ENCODE measurements at regions of chr11 and their contacts with region 1.

Region 1: DNA sequence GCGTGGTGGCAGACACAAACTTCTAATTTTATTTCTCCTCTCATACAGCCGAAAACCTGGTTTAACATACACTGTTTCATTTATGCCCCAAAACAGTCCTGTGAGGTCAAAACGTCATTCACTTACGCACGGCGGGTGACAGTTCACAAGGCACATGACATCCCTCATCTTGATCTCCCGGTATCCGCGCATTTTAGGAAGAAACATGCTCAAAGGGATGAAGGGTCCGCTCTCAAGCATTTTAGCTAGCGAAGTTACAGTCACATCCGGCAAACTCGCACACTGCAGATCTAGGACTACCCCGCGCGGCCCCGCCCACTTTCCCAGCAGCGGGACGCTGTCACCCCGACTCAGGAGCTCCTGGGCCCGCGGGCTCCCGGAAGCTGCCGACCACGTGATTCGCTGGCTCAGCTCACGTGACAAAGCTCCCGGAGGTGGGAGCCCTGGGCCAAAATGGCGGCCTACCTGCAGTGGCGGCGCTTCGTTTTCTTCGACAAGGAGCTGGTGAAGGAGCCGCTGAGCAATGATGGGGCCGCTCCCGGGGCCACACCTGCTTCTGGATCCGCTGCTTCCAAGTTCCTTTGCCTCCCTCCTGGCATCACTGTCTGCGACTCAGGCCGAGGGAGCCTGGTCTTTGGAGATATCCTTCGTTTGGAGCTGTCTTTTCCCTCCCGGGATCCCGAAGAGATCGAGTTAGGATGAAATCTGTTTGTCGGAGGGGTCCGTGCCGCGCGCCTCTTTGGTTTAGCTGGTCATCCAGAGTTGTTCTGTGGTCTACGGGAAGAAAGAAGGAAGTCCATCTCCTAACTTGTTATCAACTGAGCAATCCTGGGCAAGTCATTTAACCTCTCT is at the start of gene VPS11:
- DNase-seq: peak; percentile 89 to 100 (median 98)
- ATAC-seq: peak; percentile 92 to 99 (median 98)
- H3K4me3 ChIP-seq: peak within 1 kb of the TSS; percentile 61 to 94
- H3K4me3 Mint-ChIP-seq: peak within 1 kb of the TSS; percentile 94 to 97 (median 96)
- H3K27ac ChIP-seq: peak within 1 kb of the TSS; percentile 94
- H3K27ac Mint-ChIP-seq: peak within 1 kb of the TSS; percentile 96 to 99
- H3K4me1 ChIP-seq: peaks cover 16 to 33% of the 10 kb centered on the region in 2 experiments
- H3K4me1 Mint-ChIP-seq: peaks cover 44 to 55% (median 48%) of the 10 kb centered on the region in 3 donors
- H3K27me3 ChIP-seq: no peaks in the 10 kb centered on the region
- H3K27me3 Mint-ChIP-seq: no peaks in the 10 kb centered on the region
- total RNA-seq, gene VPS11: 59.5 to 69.8 (median 62.6) TPM

Region 2: DNA sequence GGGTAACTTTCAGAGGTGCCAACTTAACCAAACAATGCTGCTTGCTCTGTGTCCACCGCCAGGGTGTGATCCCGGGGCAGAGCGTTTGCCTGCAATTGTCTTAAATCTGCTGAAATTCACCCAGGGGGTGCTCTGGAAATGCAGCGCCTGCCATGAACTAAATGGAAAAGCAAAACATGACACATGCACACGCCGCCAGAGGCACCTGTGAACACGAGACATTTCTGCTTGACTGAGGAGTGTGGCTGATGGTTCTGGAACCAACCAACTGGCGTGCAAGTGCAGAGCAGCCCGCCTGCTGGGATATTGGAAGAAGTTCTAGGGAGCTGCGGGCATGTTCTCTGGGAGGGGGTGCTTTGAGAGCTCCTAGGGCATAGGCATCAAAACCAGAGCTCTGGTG is 1301.0 kb before region 1 on chr11:
- CTCF ChIA-PET with region 1: no interaction called
- POLR2A ChIA-PET with region 1: no interaction called
- DNase-seq: no peak
- ATAC-seq: no peak
- H3K4me3 ChIP-seq: no peak overlapping the region
- H3K4me3 Mint-ChIP-seq: no peak overlapping the region
- H3K27ac ChIP-seq: no peak overlapping the region
- H3K27ac Mint-ChIP-seq: no peak overlapping the region
- H3K4me1 ChIP-seq: no peaks in the 10 kb centered on the region
- H3K4me1 Mint-ChIP-seq: no peaks in the 10 kb centered on the region
- H3K27me3 ChIP-seq: peaks cover 0 to 25% of the 10 kb centered on the region in 2 experiments
- H3K27me3 Mint-ChIP-seq: peaks cover 16 to 21% of the 10 kb centered on the region in 2 donors

Region 3: DNA sequence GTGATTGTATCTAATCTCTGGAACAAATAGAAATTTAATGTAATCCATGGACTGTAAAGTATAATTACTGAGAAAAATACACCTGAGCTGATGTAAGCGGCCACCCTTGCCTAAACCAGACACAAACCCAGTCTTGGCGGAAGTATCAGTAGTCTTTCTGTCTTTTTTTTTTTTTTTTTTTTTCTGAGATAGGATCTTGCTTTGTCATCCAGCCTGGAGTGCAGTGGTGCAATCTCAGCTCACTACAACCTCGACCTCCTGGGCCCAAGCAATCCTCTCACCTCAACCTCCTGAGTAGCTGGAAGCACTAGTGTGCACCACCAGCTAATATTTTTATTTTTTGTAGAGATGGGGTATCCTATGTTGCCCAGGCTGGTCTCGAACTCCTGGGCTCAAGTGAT is 189.4 kb before region 1 on chr11:
- CTCF ChIA-PET with region 1: no interaction called
- POLR2A ChIA-PET with region 1: interaction called in 1 of 2 experiments, 13 read pairs
- DNase-seq: peak in 11 of 35 experiments; percentile 20 to 65 (median 32)
- ATAC-seq: peak; percentile 6 to 30 (median 21)
- H3K4me3 ChIP-seq: no peak overlapping the region
- H3K4me3 Mint-ChIP-seq: peak overlapping the region in 1 of 3 donors; percentile 79
- H3K27ac ChIP-seq: peak overlapping the region; percentile 88
- H3K27ac Mint-ChIP-seq: peak overlapping the region; percentile 97 to 98
- H3K4me1 ChIP-seq: peaks cover 58 to 96% of the 10 kb centered on the region in 2 experiments
- H3K4me1 Mint-ChIP-seq: peaks cover 91 to 96% (median 94%) of the 10 kb centered on the region in 3 donors
- H3K27me3 ChIP-seq: no peaks in the 10 kb centered on the region
- H3K27me3 Mint-ChIP-seq: no peaks in the 10 kb centered on the region

Region 4: GRCh38 chr11:119018074-119018938 is 49.3 kb before region 1 on chr11 and contains the starts of genes RPS25 and TRAPPC4:
- CTCF ChIA-PET with region 1: interaction called in 1 of 2 experiments, 5 read pairs
- POLR2A ChIA-PET with region 1: interaction called in 1 of 2 experiments, 14 read pairs
- DNase-seq: peak; percentile 84 to 99 (median 97)
- ATAC-seq: peak; percentile 88 to 92 (median 90)
- H3K4me3 ChIP-seq: peak within 1 kb of the TSS; percentile 95 to 98
- H3K4me3 Mint-ChIP-seq: peak within 1 kb of the TSS; percentile 96 to 99 (median 99)
- H3K27ac ChIP-seq: peak within 1 kb of the TSS; percentile 96
- H3K27ac Mint-ChIP-seq: peak within 1 kb of the TSS; percentile 100
- H3K4me1 ChIP-seq: peaks cover 15 to 45% of the 10 kb centered on the region in 2 experiments
- H3K4me1 Mint-ChIP-seq: peaks cover 53 to 68% (median 64%) of the 10 kb centered on the region in 3 donors
- H3K27me3 ChIP-seq: no peaks in the 10 kb centered on the region
- H3K27me3 Mint-ChIP-seq: no peaks in the 10 kb centered on the region
- total RNA-seq, gene RPS25: 1,733 to 2,728 (median 2,161) TPM
- total RNA-seq, gene TRAPPC4: 65.0 to 78.5 (median 74.3) TPM

Region 5: DNA sequence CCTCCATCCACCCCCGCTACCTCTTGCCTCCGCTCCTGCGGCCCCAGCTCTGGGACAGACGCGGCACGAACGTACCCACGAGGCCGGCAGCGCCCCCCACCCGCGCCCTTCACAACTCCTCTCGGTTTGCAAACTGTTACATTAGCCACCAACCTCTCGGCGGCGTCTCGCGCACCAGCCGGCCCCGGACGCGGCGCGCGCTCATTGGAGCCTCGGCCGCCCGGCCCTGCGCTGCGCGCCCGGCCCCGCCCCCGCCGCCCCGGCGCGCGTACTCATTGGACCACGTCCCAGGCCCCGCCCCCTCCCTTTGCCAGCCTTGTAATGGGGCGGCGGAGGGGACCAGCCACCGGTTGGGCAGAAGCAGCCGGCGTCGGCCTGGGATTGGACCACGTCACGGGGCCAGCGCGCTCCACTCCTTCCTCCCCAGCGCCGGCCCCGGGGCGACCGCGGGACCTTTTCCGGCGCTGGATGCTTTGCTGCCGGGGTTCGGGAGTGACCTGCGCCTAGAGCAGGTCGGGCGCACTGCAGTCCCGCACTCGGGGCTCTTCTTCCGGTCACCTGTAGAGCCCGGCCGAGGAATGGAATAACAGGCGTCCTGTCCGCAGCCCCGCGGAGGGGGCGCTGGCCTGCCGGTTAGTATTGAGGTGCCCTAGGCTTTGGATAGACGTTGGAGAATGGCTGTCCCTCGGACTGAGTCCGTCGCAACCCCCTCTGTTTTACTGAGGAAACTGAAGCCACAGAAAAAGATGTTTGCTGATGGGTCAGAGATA is 10.4 kb before region 1 on chr11 and contains the start of gene HYOU1:
- CTCF ChIA-PET with region 1: interaction called in 1 of 2 experiments, 37 read pairs
- POLR2A ChIA-PET with region 1: interaction called in 1 of 2 experiments, 10 read pairs
- DNase-seq: peak; percentile 95 to 100 (median 98)
- ATAC-seq: peak; percentile 90 to 97 (median 93)
- H3K4me3 ChIP-seq: peak within 1 kb of the TSS; percentile 77
- H3K4me3 Mint-ChIP-seq: peak within 1 kb of the TSS; percentile 94 to 95 (median 94)
- H3K27ac ChIP-seq: peak within 1 kb of the TSS; percentile 63
- H3K27ac Mint-ChIP-seq: peak within 1 kb of the TSS; percentile 94 to 95
- H3K4me1 ChIP-seq: peaks cover 12 to 28% of the 10 kb centered on the region in 2 experiments
- H3K4me1 Mint-ChIP-seq: peaks cover 34 to 45% (median 36%) of the 10 kb centered on the region in 3 donors
- H3K27me3 ChIP-seq: no peaks in the 10 kb centered on the region
- H3K27me3 Mint-ChIP-seq: no peaks in the 10 kb centered on the region
- total RNA-seq, gene HYOU1: 91.2 to 113 (median 112) TPM

Region 6: GRCh38 chr11:119095066-119095880 is 27.7 kb after region 1 on chr11:
- CTCF ChIA-PET with region 1: interaction called in 1 of 2 experiments, 6 read pairs
- POLR2A ChIA-PET with region 1: interaction called, 6 to 15 read pairs
- DNase-seq: peak; percentile 97 to 100 (median 99)
- ATAC-seq: peak; percentile 85 to 90 (median 88)
- H3K4me3 ChIP-seq: peak overlapping the region; percentile 73 to 95
- H3K4me3 Mint-ChIP-seq: peak overlapping the region; percentile 88 to 98 (median 92)
- H3K27ac ChIP-seq: peak overlapping the region; percentile 46
- H3K27ac Mint-ChIP-seq: peak overlapping the region; percentile 90 to 93
- H3K4me1 ChIP-seq: peaks cover 9 to 32% of the 10 kb centered on the region in 2 experiments
- H3K4me1 Mint-ChIP-seq: peaks cover 38 to 39% (median 38%) of the 10 kb centered on the region in 3 donors
- H3K27me3 ChIP-seq: no peaks in the 10 kb centered on the region
- H3K27me3 Mint-ChIP-seq: no peaks in the 10 kb centered on the region

Region 7: GRCh38 chr11:119101759-119102423 is 34.3 kb after region 1 on chr11 and contains the start of gene DPAGT1:
- CTCF ChIA-PET with region 1: interaction called, 3 to 15 read pairs
- POLR2A ChIA-PET with region 1: interaction called in 1 of 2 experiments, 17 read pairs
- DNase-seq: peak; percentile 70 to 89 (median 80)
- ATAC-seq: peak; percentile 85 to 90 (median 86)
- H3K4me3 ChIP-seq: peak within 1 kb of the TSS; percentile 83 to 98
- H3K4me3 Mint-ChIP-seq: peak within 1 kb of the TSS; percentile 86 to 98 (median 97)
- H3K27ac ChIP-seq: peak within 1 kb of the TSS; percentile 87
- H3K27ac Mint-ChIP-seq: peak within 1 kb of the TSS; percentile 99 to 100
- H3K4me1 ChIP-seq: peaks cover 16 to 35% of the 10 kb centered on the region in 2 experiments
- H3K4me1 Mint-ChIP-seq: peaks cover 39 to 57% (median 53%) of the 10 kb centered on the region in 3 donors
- H3K27me3 ChIP-seq: no peaks in the 10 kb centered on the region
- H3K27me3 Mint-ChIP-seq: no peaks in the 10 kb centered on the region
- total RNA-seq, gene DPAGT1: 21.7 to 54.2 (median 43.9) TPM